ENCODE measurements at regions of chr21 and their contacts with region 1.

Region 1: GRCh38 chr21:41777951-41778874 is 11.4 kb upstream of the RIPK4 start:
- DNase-seq: peak; percentile 96
- ATAC-seq: peak; percentile 64
- H3K4me3 ChIP-seq: peak overlapping the region; percentile 41; the same call in 1 of the 2 replicates
- H3K27ac ChIP-seq: peak overlapping the region; percentile 97
- H3K4me1 ChIP-seq: peaks cover 54% of the 10 kb centered on the region
- H3K27me3 ChIP-seq: no peaks in the 10 kb centered on the region
- CTCF ChIP-seq: peak; percentile 85

Region 2: DNA sequence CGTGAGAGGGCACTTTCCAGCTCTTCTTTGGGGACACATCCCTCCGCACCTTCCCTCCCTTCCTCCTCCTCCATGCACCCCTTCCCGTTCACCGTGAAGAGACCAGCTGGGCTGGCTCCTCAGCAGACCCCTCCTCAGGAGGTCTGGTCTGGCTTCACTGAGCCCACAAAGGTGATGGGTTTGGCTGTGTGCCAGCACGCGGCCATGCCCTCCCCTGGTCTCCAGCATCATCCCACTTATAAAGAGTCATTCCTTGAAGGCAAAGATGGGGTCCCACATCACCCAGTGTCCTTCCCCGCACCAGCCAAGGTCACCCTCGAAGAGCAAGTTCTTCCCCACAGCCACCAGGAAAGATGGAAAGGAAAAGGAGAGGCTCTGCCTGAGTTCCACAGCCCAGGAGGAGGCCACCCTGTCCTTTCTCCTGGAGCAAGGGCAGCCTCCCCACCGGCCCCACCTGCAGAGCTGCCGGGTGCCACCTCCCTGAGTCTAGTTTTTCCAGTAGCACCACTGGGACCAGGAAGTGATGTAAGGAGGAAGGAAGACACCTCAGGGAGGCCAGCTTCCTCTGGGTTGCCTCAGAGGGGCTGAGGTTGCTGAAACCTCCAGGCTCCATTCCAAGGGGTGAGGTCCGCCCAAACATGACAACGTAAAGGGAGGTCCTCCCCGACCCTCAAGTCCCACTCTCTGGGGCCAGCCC is 44.1 kb before region 1 on chr21:
- CTCF ChIA-PET with region 1: no interaction called
- POLR2A ChIA-PET with region 1: no interaction called
- intact Hi-C with region 1: no loop called
- DNase-seq: no peak
- ATAC-seq: no peak
- H3K4me3 ChIP-seq: no peak overlapping the region
- H3K27ac ChIP-seq: no peak overlapping the region
- H3K4me1 ChIP-seq: peaks cover 14% of the 10 kb centered on the region
- H3K27me3 ChIP-seq: no peaks in the 10 kb centered on the region
- CTCF ChIP-seq: no peak

Region 3: GRCh38 chr21:41761211-41762181 is 16.7 kb before region 1 on chr21:
- CTCF ChIA-PET with region 1: interaction called, 8 read pairs
- POLR2A ChIA-PET with region 1: no interaction called
- intact Hi-C with region 1: loop called (anchors 2 kb)
- DNase-seq: peak; percentile 98
- ATAC-seq: peak; percentile 65
- H3K4me3 ChIP-seq: peak overlapping the region; percentile 94
- H3K27ac ChIP-seq: peak overlapping the region; percentile 97
- H3K4me1 ChIP-seq: peaks cover 66% of the 10 kb centered on the region
- H3K27me3 ChIP-seq: no peaks in the 10 kb centered on the region
- CTCF ChIP-seq: no peak

Region 4: GRCh38 chr21:41816220-41817165 is 38.3 kb after region 1 on chr21:
- CTCF ChIA-PET with region 1: interaction called, 12 read pairs
- POLR2A ChIA-PET with region 1: no interaction called
- intact Hi-C with region 1: loop called (anchors 1 kb)
- DNase-seq: peak; percentile 67
- ATAC-seq: peak; percentile 86
- H3K4me3 ChIP-seq: no peak overlapping the region
- H3K27ac ChIP-seq: peak overlapping the region; percentile 61
- H3K4me1 ChIP-seq: peaks cover 13% of the 10 kb centered on the region
- H3K27me3 ChIP-seq: no peaks in the 10 kb centered on the region
- CTCF ChIP-seq: peak; percentile 83

Measured in PC-3 (cell line).